ENCODE measurements at regions of chr19 and their contacts with region 1.

Region 1: DNA sequence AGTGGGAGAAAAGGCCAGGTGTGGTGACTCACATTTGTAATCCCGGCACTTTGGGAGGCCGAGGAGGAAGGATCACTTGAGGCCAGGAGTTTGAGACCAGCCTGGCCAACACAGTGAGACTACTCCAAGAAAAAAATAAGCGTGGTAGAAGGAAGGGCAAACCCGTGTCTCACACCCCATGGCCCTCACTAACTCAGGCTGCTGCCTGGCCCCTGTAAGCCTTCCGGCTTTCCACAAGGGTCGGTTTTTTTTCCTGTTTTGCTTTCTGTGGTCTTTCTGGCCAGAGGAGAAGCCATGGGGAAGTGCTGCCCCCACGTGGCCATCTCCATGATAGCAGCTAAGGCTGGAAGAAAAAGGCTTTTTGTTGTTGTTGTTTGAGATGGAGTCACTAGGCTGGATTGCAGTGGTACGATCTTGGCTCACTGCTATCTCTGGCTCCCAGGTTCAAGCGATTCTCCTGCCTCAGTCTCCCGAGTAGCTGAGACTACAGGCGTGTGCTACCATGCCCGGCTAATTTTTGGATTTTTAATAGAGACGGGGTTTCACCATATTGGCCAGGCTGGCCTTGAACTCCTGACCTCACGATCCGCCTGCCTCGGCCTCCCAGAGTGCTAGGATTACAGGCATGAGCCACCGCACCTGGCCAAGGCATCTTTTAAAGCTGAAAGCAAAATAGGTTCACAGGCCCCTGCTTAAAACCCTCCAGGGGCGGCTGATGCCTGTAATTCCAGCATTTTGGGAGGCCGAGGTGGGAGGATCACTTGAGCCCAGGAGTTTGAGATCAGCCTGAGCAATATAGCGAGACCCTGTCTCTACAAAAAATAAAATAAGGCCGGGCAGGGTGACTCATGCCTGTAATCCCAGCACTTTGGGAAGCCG is 7.5 kb upstream of the ARHGEF18 start:
- DNase-seq: peak; percentile 70 to 90 (median 82)
- ATAC-seq: peak in 1 of 2 donors; percentile 21
- H3K4me3 Mint-ChIP-seq: peak overlapping the region in 8 of 10 donors; percentile 9 to 53 (median 46)
- H3K27ac Mint-ChIP-seq: peak overlapping the region; percentile 34 to 91 (median 88)
- H3K4me1 Mint-ChIP-seq: peaks cover 35 to 86% (median 61%) of the 10 kb centered on the region in 4 donors
- H3K27me3 Mint-ChIP-seq: no peaks in the 10 kb centered on the region

Region 2: GRCh38 chr19:7355151-7355820 is 14.1 kb after region 1 on chr19:
- POLR2A ChIA-PET with region 1: interaction called, 48 read pairs
- DNase-seq: no peak
- ATAC-seq: no peak
- H3K4me3 Mint-ChIP-seq: peak overlapping the region in 8 of 10 donors; percentile 27 to 100 (median 78)
- H3K27ac Mint-ChIP-seq: peak overlapping the region; percentile 69 to 96 (median 94)
- H3K4me1 Mint-ChIP-seq: peaks cover 51 to 93% (median 86%) of the 10 kb centered on the region in 4 donors
- H3K27me3 Mint-ChIP-seq: no peaks in the 10 kb centered on the region

Region 3: GRCh38 chr19:7461841-7462750 is 120.9 kb after region 1 on chr19:
- POLR2A ChIA-PET with region 1: no interaction called
- DNase-seq: no peak
- ATAC-seq: no peak
- H3K4me3 Mint-ChIP-seq: no peak overlapping the region
- H3K27ac Mint-ChIP-seq: peak overlapping the region in 1 of 10 donors; percentile 6
- H3K4me1 Mint-ChIP-seq: peaks cover 0 to under 1% (median 0%) of the 10 kb centered on the region in 4 donors
- H3K27me3 Mint-ChIP-seq: no peaks in the 10 kb centered on the region

Measured in naive thymus-derived CD8-positive, alpha-beta T cell (primary cell).